HEK293 (cell line): ENCODE measurements at regions of chr3 and their contacts with region 1.

Region 1: DNA sequence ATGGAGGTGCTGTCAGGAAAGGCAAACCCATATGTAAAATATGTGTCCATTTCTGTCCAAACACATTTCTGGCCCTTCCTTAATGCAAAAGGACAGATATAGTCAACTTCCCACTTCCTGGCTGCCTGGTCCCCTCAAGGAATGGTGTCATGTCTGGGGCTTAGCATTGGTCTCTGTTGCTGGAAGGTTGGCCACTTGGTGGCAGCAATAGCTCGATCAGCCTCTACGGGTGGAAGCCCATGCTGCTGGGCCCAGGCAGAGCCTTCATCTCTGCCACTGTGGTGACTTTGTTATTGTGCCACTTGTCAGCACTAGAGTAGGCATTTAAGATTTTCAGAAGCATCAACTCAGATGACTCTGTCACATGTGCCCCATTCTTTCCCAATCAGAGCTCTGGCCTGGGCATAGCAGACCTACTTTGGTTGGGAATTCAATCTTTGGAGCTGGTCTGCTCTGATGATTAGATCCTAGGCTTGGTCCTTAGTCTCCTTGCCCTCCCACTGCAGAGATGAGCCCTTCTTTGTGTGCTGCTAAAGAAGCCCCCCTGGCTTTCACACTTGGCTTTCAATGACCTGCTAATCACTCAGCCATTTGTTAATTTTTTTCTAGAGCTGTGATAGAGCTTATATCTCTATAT is 51.0 kb upstream of the SPSB4 start:
- H3K4me3 ChIP-seq: no peak overlapping the region
- H3K27ac ChIP-seq: no peak overlapping the region
- H3K4me1 ChIP-seq: no peaks in the 10 kb centered on the region
- CTCF ChIP-seq: peak; percentile 37; the same call in 1 of the 2 replicates

Region 2: GRCh38 chr3:140363801-140364200 is 636.3 kb before region 1 on chr3:
- CTCF ChIA-PET with region 1: no interaction called
- POLR2A ChIA-PET with region 1: no interaction called
- H3K4me3 ChIP-seq: no peak overlapping the region
- H3K27ac ChIP-seq: no peak overlapping the region
- H3K4me1 ChIP-seq: no peaks in the 10 kb centered on the region
- CTCF ChIP-seq: no peak

Region 3: GRCh38 chr3:141174674-141175073 is 174.5 kb after region 1 on chr3:
- CTCF ChIA-PET with region 1: no interaction called
- POLR2A ChIA-PET with region 1: no interaction called
- H3K4me3 ChIP-seq: no peak overlapping the region
- H3K27ac ChIP-seq: no peak overlapping the region
- H3K4me1 ChIP-seq: no peaks in the 10 kb centered on the region
- CTCF ChIP-seq: no peak

Region 4: GRCh38 chr3:141192345-141192744 is 192.2 kb after region 1 on chr3:
- CTCF ChIA-PET with region 1: interaction called, 38 read pairs
- POLR2A ChIA-PET with region 1: no interaction called
- H3K4me3 ChIP-seq: no peak overlapping the region
- H3K27ac ChIP-seq: no peak overlapping the region
- H3K4me1 ChIP-seq: no peaks in the 10 kb centered on the region
- CTCF ChIP-seq: peak; percentile 91